ENCODE measurements at regions of chr5 and their contacts with region 1.

Region 1: DNA sequence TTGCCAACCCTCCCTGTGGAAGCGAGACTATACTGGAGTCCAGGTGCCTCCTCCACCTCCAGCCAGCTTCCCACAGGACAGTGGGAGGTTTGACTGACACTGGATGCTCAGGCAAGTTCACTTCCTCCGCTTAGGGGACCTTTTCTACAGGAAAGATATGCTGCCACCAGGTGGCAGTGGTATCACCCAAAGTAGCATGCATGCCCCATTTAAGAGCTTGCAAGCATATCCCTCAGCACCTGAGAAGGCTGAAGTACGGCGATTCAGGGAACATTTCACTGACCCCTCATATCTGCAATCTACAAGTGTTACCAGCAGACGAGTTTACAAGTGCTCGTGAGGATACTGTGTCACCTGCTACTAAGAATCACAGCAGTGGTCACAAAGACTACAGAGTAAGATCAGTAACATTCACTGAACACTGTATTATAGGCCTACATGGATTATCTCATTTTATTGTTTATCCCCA is 75.5 kb downstream of the KLHL3 start:
- DNase-seq: peak; percentile 70
- H3K27ac ChIP-seq: no peak overlapping the region
- CTCF ChIP-seq: peak; percentile 82

Region 2: DNA sequence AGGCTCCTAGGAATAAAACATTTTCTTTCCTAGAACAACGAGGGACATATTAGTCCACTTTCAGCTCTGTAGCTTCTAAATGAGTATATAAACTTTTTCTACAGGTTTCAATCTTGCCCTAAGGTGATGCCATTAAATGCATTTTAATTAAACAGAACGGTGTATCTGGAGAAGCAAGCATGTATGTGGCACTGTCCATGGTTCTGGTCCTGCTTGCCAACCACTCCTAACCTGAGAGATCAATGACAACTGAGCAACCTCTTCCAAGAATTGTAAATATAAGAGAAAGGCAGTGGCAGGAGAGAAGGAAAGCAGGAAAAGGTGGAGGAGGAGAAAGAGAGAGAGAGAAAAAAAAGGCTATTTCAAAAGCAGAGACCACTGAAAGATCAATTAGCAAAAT is 65.7 kb before region 1 on chr5:
- CTCF ChIA-PET with region 1: no interaction called
- POLR2A ChIA-PET with region 1: no interaction called
- DNase-seq: no peak
- H3K27ac ChIP-seq: no peak overlapping the region
- CTCF ChIP-seq: no peak

Region 3: DNA sequence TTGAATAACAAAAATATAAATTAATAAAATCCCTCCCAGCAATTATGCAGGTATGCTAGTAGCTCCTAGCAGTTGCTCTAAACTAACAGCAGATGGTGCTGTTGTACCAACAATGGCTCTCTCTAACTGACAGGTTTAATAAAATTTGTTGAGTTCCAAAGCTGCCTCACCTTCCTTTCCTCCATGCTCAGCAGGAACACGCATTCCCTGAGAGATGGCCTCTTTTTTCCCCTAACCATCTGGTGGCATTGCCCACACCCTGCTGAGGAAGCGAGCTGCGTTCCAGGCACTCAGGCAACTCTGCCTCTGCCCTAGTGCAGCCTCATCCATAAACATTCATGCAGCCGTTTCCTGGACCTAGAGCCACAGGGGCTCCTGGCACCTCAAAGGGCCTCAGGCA is 30.7 kb before region 1 on chr5:
- CTCF ChIA-PET with region 1: interaction called, 16 read pairs
- POLR2A ChIA-PET with region 1: no interaction called
- DNase-seq: peak; percentile 83
- H3K27ac ChIP-seq: no peak overlapping the region
- CTCF ChIP-seq: peak; percentile 90

Region 4: DNA sequence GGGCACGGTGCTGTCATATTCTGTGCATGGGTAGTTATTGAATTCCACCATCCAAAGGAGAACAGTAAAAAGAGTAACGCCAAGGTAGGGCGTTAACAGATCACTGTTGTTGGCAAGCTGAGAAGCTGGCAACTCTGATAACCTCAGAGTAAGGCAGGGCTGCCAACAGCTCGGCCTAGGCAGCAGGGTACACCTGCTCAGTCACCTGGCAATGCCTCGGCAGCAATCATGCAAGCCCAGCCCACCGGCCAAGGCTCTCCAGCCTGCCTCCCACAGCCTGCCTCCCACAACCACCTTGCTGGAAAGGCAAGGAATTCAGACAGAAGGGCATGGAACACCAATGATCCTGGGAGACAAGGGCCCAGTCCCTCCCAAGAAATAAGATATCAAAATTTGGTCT is 11.6 kb after region 1 on chr5:
- CTCF ChIA-PET with region 1: interaction called, 28 read pairs
- POLR2A ChIA-PET with region 1: no interaction called
- DNase-seq: no peak
- H3K27ac ChIP-seq: no peak overlapping the region
- CTCF ChIP-seq: no peak

Region 5: DNA sequence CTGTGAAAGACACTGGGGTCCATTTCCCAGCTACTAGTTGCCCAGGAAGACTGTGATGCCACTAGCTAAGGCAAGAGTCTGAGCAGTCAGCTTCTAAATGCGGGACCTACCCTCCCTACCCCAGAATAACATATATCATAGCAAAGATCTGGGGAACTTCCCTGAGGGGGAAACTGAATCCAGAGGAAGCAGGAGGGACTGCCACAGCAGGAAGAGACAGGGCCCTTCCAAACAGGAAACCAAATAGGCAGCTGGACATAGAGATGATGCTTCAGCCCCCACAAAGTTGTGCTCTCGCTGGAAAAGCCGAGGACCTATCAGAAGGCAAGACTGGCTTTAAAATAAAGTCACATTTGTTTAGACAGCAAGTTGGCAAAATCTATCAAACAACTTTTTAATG is 24.4 kb after region 1 on chr5:
- CTCF ChIA-PET with region 1: interaction called, 11 read pairs
- POLR2A ChIA-PET with region 1: no interaction called
- DNase-seq: no peak
- H3K27ac ChIP-seq: no peak overlapping the region
- CTCF ChIP-seq: no peak

Region 6: DNA sequence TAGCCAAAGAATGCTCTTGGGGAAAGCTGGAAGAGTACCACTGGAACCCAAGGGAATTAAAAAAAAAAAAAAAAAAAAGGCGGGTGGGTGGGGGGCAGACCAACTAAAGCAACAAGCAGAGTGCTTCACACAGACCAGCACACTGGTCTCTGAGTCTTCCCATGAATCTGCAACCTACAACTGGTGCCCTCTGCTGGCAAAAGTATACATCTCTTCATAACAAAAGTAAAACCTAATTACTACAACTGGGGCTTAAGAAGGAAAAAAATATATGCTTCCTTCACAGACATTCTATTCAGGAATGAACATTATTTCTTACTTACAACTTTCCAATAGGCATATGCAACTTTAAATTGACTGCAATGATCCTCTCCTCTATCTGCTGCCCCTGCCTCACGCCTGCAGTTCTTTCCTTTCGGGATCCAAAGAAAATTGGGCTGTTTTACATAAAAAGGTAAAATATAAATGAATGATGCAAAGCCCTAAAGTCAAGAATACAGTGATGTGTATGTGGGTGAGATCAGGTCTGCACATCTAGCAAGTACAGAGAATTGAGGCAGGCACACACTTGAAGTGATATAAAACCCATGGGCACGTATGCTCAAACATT is 82.8 kb after region 1 on chr5:
- CTCF ChIA-PET with region 1: interaction called, 31 read pairs
- POLR2A ChIA-PET with region 1: no interaction called
- DNase-seq: peak; percentile 62
- H3K27ac ChIP-seq: no peak overlapping the region
- CTCF ChIP-seq: peak; percentile 84

Measured in RWPE1 (cell line).